ENCODE measurements at regions of chr19 and their contacts with region 1.

Region 1: GRCh38 chr19:42219812-42220750 is at the start of gene ZNF526:
- DNase-seq: peak; percentile 96 to 98 (median 96)
- H3K4me3 ChIP-seq: peak within 1 kb of the TSS; percentile 75
- H3K4me3 Mint-ChIP-seq: peak within 1 kb of the TSS; percentile 94 to 100 (median 97)
- H3K27ac ChIP-seq: peak within 1 kb of the TSS; percentile 99
- H3K27ac Mint-ChIP-seq: peak within 1 kb of the TSS; percentile 95 to 99 (median 96)
- H3K4me1 ChIP-seq: peaks cover 46% of the 10 kb centered on the region
- H3K4me1 Mint-ChIP-seq: peaks cover 45 to 62% (median 50%) of the 10 kb centered on the region in 3 donors
- H3K27me3 ChIP-seq: no peaks in the 10 kb centered on the region
- H3K27me3 Mint-ChIP-seq: peaks cover 0 to 3% of the 10 kb centered on the region in 2 donors
- total RNA-seq, gene ZNF526: 18.4 to 20.5 TPM

Region 2: DNA sequence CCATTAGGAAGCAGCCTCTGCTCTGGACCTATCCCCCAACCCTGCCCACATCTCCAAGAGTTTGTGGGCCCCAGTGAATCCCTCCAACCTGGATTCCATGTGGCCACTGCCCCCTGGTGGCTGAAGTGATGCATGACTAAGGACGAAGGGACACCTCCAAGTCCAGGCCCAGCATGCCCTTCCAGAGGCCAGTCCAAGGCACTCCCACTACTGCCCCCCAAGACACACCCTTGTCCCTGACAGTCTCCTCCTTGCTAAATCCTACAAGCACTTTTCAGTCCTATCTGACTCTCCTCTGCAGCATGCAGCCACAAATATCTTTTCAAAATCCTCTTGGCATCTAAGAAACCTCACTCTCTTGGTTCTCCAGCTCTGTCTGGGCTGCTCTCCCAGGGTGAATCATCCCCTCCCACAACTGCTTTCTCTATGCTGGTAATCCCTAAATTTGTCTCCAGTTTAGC is 35.6 kb before region 1 on chr19:
- CTCF ChIA-PET with region 1: interaction called, 10 read pairs
- POLR2A ChIA-PET with region 1: interaction called, 3 read pairs
- DNase-seq: peak; percentile 45 to 84 (median 60)
- H3K4me3 ChIP-seq: no peak overlapping the region
- H3K4me3 Mint-ChIP-seq: peak overlapping the region in 6 of 7 donors; percentile 15 to 77 (median 50)
- H3K27ac ChIP-seq: no peak overlapping the region
- H3K27ac Mint-ChIP-seq: peak overlapping the region in 7 of 8 donors; percentile 13 to 94 (median 68)
- H3K4me1 ChIP-seq: peaks cover 21% of the 10 kb centered on the region
- H3K4me1 Mint-ChIP-seq: peaks cover 49 to 60% (median 50%) of the 10 kb centered on the region in 3 donors
- H3K27me3 ChIP-seq: peaks cover 7% of the 10 kb centered on the region
- H3K27me3 Mint-ChIP-seq: peaks cover 0 to 8% of the 10 kb centered on the region in 2 donors

Region 3: GRCh38 chr19:42207767-42208271 is 12.3 kb before region 1 on chr19:
- CTCF ChIA-PET with region 1: interaction called, 10 read pairs
- POLR2A ChIA-PET with region 1: interaction called, 4 read pairs
- DNase-seq: peak in 1 of 5 donors; percentile 42
- H3K4me3 ChIP-seq: no peak overlapping the region
- H3K4me3 Mint-ChIP-seq: peak overlapping the region in 5 of 7 donors; percentile 46 to 84 (median 60)
- H3K27ac ChIP-seq: no peak overlapping the region
- H3K27ac Mint-ChIP-seq: peak overlapping the region; percentile 59 to 94 (median 90)
- H3K4me1 ChIP-seq: peaks cover 48% of the 10 kb centered on the region
- H3K4me1 Mint-ChIP-seq: peaks cover 54 to 75% (median 71%) of the 10 kb centered on the region in 3 donors
- H3K27me3 ChIP-seq: no peaks in the 10 kb centered on the region
- H3K27me3 Mint-ChIP-seq: no peaks in the 10 kb centered on the region

Region 4: DNA sequence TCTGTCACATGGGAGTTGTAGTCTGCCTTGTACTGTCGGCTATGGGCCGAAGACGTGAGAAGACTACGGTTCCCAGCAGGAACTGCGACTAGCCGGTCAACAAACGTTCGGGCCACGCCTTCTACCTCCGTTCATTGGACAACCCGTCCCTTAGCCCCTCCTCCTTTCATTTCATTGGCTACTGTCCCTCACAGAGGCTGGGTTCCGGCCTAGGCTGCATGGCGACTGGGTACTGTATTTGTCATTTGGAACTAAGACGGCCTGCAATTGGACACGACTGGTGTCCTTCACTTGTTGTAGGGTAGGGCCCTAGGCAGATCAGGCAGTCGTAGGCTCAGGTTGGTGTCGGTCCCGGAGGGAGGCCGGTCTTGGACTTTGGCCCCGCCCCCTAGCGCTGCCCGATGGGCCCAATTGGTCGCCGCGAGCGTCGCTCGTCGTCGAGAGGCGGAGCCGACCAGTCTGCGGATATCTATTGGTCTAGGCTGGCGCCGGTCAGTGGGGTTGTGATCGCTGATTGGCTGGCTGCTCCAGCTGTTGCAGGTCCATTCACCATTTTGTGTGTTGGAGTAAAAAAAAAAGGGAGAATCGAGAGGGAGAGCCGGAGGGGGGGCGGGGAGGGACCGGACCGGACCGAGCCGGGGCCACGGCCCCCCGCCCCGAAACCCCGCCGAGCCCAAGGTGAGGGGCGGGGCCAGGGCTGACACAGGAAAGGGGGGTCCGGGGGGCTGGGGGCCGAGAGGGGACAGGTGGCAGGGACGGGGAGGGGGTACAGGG is 48.8 kb after region 1 on chr19 and contains the start of gene CIC:
- CTCF ChIA-PET with region 1: no interaction called
- POLR2A ChIA-PET with region 1: interaction called, 10 read pairs
- DNase-seq: peak; percentile 99 to 100 (median 99)
- H3K4me3 ChIP-seq: peak within 1 kb of the TSS; percentile 72
- H3K4me3 Mint-ChIP-seq: peak within 1 kb of the TSS in 3 of 7 donors; percentile 83 to 91 (median 89)
- H3K27ac ChIP-seq: peak within 1 kb of the TSS; percentile 98
- H3K27ac Mint-ChIP-seq: peak within 1 kb of the TSS in 6 of 8 donors; percentile 95 to 100 (median 98)
- H3K4me1 ChIP-seq: peaks cover 29% of the 10 kb centered on the region
- H3K4me1 Mint-ChIP-seq: peaks cover 21 to 32% (median 27%) of the 10 kb centered on the region in 3 donors
- H3K27me3 ChIP-seq: no peaks in the 10 kb centered on the region
- H3K27me3 Mint-ChIP-seq: peaks cover 0 to 4% of the 10 kb centered on the region in 2 donors
- total RNA-seq, gene CIC: 53.9 to 60.4 TPM